ENCODE measurements at regions of chr17 and their contacts with region 1.

Region 1: DNA sequence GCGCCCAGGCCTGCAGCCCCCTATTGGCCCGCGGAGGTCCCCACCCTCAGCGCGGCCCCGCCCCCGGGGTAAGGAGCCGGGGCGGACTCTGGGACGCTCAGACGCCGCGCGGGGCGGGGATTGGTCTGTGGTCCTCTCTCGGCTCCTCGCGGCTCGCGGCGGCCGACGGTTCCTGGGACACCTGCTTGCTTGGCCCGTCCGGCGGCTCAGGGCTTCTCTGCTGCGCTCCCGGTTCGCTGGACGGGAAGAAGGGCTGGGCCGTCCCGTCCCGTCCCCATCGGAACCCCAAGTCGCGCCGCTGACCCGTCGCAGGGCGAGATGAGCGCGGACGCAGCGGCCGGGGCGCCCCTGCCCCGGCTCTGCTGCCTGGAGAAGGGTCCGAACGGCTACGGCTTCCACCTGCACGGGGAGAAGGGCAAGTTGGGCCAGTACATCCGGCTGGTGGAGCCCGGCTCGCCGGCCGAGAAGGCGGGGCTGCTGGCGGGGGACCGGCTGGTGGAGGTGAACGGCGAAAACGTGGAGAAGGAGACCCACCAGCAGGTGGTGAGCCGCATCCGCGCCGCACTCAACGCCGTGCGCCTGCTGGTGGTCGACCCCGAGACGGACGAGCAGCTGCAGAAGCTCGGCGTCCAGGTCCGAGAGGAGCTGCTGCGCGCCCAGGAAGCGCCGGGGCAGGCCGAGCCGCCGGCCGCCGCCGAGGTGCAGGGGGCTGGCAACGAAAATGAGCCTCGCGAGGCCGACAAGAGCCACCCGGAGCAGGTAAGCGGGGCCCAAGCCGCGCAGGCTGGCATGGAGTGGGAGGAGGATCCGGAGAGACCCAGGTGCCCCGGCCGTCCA is at the start of gene NHERF1:
- DNase-seq: peak; percentile 59 to 90
- ATAC-seq: peak; percentile 86 to 96
- H3K4me3 ChIP-seq: peak within 1 kb of the TSS; percentile 76
- H3K27ac ChIP-seq: peak within 1 kb of the TSS; percentile 71 to 88
- H3K4me1 ChIP-seq: peaks cover 30% of the 10 kb centered on the region
- CTCF ChIP-seq: no peak; the same call in 2 of the 3 replicates
- EP300 ChIP-seq: no peak
- POLR2A ChIP-seq: peak; percentile 99
- RAD21 ChIP-seq: peak in 1 of 2 experiments; percentile 36; a peak in 1 of 5 replicates
- polyA plus RNA-seq, gene NHERF1: 50.2 and 51.5 TPM in 2 replicates

Region 2: DNA sequence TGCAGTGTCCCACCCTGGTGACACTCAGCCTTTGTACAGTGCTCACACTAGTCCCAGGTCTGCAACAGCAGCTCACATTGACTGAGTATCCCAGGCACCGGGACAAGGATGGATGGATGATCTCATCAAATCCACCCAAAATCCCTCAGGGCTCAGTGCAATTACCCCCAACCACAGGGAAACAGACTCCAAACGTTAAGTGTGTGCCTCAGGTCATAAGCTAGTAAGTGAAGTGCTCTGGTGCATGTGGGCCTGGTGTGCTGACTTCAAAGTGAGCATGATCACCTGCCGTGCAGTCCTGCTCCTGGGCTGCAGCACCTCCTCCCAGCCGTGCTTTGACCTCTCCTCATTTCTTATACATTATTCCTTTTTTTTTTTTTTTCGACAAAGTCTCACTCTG is 94.0 kb before region 1 on chr17:
- CTCF ChIA-PET with region 1: interaction called, 71 read pairs
- POLR2A ChIA-PET with region 1: interaction called, 11 read pairs
- DNase-seq: no peak
- ATAC-seq: no peak
- H3K4me3 ChIP-seq: no peak overlapping the region
- H3K27ac ChIP-seq: no peak overlapping the region
- H3K4me1 ChIP-seq: 0 out of 3 replicates have a peak, but pooled peaks cover 3% of the 10 kb centered on the region
- CTCF ChIP-seq: no peak
- EP300 ChIP-seq: no peak
- POLR2A ChIP-seq: no peak
- RAD21 ChIP-seq: no peak

Region 3: GRCh38 chr17:74723891-74724290 is 24.9 kb before region 1 on chr17:
- CTCF ChIA-PET with region 1: interaction called, 10 read pairs
- POLR2A ChIA-PET with region 1: no interaction called
- DNase-seq: no peak
- ATAC-seq: no peak
- H3K4me3 ChIP-seq: no peak overlapping the region
- H3K27ac ChIP-seq: no peak overlapping the region
- H3K4me1 ChIP-seq: no peaks in the 10 kb centered on the region
- CTCF ChIP-seq: no peak
- EP300 ChIP-seq: no peak
- POLR2A ChIP-seq: no peak
- RAD21 ChIP-seq: no peak

Region 4: DNA sequence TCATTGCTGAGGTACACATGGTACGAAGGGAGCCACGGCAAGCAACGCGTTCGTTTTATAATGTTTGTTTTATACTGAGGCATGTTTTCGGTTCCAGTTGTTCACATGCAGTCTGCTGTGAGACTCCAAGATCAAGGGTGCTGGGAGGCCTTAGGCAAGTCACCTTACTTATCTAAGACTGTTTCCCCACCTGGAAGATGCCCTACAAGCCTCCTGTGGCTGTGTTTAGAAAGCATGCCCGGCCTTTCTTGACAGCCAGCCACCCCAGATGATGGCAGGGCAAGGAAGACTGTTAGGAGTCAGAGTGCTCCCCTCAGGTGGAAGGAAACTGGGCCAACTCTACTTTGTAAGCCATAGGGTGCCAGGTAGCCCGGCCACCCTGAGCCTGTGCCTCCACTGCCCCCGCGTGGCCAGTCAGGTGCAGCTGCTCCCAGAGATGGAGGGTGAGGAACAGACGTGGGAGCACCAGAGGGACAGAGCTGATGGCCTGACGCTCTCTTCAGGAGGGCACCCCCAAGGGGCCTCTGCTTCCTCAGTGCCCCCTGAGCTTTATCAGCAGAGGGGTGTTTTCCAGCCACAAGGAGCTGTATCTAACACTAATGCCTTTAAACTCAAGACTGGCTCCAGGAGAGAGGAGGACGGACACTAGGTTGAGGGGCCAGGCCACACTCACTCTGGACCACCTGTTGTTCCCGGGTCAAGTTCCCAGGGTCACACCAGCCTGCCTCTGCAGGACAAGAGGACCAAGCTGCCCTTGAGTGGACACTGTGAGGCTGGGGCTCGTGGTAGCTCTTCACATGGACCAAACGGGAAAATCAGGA is 22.0 kb after region 1 on chr17:
- CTCF ChIA-PET with region 1: interaction called, 705 read pairs
- POLR2A ChIA-PET with region 1: interaction called, 15 read pairs
- DNase-seq: peak; percentile 77 to 88
- ATAC-seq: peak; percentile 79 to 89
- H3K4me3 ChIP-seq: no peak overlapping the region
- H3K27ac ChIP-seq: no peak overlapping the region
- H3K4me1 ChIP-seq: peaks cover 33% of the 10 kb centered on the region
- CTCF ChIP-seq: peak; percentile 86
- EP300 ChIP-seq: no peak
- POLR2A ChIP-seq: no peak
- RAD21 ChIP-seq: peak; percentile 87 to 92

Region 5: GRCh38 chr17:74790161-74791054 is 41.7 kb after region 1 on chr17:
- CTCF ChIA-PET with region 1: interaction called, 705 read pairs
- POLR2A ChIA-PET with region 1: interaction called, 3 read pairs
- DNase-seq: no peak
- ATAC-seq: no peak
- H3K4me3 ChIP-seq: no peak overlapping the region
- H3K27ac ChIP-seq: no peak overlapping the region
- H3K4me1 ChIP-seq: no peaks in the 10 kb centered on the region
- CTCF ChIP-seq: no peak
- EP300 ChIP-seq: no peak
- POLR2A ChIP-seq: no peak
- RAD21 ChIP-seq: no peak

Region 6: GRCh38 chr17:74864866-74865395 is 116.2 kb after region 1 on chr17:
- CTCF ChIA-PET with region 1: interaction called, 75 read pairs
- POLR2A ChIA-PET with region 1: no interaction called
- DNase-seq: peak; percentile 78 to 85
- ATAC-seq: peak; percentile 49 to 74
- H3K4me3 ChIP-seq: no peak overlapping the region
- H3K27ac ChIP-seq: no peak overlapping the region
- H3K4me1 ChIP-seq: peaks cover 38% of the 10 kb centered on the region
- CTCF ChIP-seq: peak; percentile 77
- EP300 ChIP-seq: no peak
- POLR2A ChIP-seq: no peak
- RAD21 ChIP-seq: peak; percentile 76 to 85

Region 7: DNA sequence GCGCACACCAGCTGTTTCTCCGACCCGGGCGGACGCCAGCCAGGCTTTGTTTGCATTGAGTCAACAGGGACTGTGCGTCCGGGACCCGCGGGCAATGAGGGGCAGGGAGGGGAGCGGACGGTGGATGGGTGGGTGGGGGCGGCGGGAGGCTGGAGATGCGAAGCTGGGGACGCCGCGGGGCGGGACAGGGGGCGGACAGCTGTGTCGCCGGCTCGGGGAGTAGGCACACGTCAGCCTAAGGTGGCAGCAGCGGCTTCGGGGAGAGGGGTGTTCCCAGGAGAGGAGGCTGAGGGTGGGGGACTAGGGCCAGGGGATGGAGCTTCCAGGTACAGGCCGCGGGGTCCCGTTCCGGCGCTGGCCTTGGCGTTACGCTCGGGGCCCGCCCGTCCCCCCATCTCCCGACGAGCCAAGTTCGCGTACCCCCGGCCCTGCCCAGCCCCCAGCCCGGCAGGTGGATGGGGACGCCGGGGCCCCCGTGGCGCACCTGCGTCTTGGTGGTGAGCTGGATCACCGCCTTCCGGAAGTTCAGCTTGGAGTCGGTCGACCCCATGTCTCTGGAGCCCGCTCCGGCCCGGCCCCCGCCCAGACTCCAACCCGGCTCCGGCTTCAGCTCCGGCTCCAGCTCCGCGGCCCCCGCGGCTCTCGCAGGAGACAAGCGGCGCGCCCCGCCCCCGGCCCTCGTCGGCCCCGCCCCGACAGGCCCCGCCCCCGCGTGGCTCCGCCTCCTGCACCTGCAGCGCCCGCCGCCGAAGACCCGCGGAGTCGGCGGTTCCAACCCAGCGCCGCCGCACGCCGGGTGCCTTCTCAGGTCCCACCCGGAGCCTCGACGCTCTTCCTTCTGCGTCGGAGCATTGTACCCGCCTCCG is 223.6 kb after region 1 on chr17 and contains the start of gene HID1:
- CTCF ChIA-PET with region 1: no interaction called
- POLR2A ChIA-PET with region 1: no interaction called
- DNase-seq: peak; percentile 56 to 88
- ATAC-seq: peak; percentile 83 to 85
- H3K4me3 ChIP-seq: peak within 1 kb of the TSS; percentile 71
- H3K27ac ChIP-seq: peak within 1 kb of the TSS; percentile 77 to 84
- H3K4me1 ChIP-seq: peaks cover 9% of the 10 kb centered on the region
- CTCF ChIP-seq: no peak
- EP300 ChIP-seq: no peak
- POLR2A ChIP-seq: no peak; the same call in 1 of the 2 replicates
- RAD21 ChIP-seq: no peak
- polyA plus RNA-seq, gene HID1: 11.7 and 15.2 TPM in 2 replicates

Measured in A549 (cell line).